ENCODE measurements at regions of chr9 and their contacts with region 1.

Region 1: GRCh38 chr9:68999393-69000105 is 14.4 kb downstream of the PRKACG start:
- DNase-seq: peak; percentile 65
- H3K4me3 Mint-ChIP-seq: no peak overlapping the region
- H3K27ac Mint-ChIP-seq: peak overlapping the region; percentile 64
- H3K4me1 Mint-ChIP-seq: peaks cover 42% of the 10 kb centered on the region
- H3K27me3 Mint-ChIP-seq: no peaks in the 10 kb centered on the region

Region 2: DNA sequence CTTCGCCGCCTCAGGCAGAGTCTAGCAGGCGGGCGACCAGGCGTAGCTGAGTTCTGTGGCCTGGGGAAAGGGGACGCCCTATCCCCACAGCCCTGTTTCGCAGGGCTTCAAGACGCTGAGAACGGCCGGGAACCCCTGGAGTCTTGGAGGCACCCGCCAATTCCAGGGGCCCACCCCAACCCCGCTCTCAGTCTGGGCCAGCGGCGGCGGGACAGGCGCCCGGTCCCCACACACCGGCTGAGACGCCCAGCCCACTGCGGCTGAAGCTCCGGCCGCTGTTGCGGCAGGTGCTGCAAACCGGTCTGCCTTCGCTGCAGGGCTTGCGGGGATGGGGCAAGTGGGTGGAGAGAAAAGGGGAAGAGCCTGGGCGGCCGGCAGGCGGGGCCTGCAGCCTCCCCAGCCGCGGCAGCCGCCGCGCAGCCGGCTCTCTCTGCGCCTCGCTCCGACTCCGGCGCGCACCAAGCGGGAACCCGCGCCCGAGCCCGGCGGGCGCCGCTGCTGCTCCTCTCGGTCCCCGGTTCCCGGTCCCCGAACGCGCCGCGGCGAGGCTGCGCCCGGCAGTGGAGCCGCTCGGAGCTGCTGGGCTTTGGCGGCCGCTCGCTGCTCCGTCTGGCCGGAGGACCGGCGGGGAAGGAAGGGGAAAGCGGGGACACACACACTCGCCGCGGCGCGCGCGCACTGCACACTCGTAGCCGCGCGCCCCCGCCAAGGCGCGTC is 294.6 kb before region 1 on chr9 and contains the start of gene PIP5K1B:
- intact Hi-C with region 1: loop called (anchors 2 kb)
- DNase-seq: peak; percentile 69
- H3K4me3 Mint-ChIP-seq: peak within 1 kb of the TSS; percentile 88
- H3K27ac Mint-ChIP-seq: peak within 1 kb of the TSS; percentile 67
- H3K4me1 Mint-ChIP-seq: peaks cover 54% of the 10 kb centered on the region
- H3K27me3 Mint-ChIP-seq: peaks cover 36% of the 10 kb centered on the region
- total RNA-seq, gene PIP5K1B: 76.2 and 77.2 TPM in 2 replicates

Region 3: DNA sequence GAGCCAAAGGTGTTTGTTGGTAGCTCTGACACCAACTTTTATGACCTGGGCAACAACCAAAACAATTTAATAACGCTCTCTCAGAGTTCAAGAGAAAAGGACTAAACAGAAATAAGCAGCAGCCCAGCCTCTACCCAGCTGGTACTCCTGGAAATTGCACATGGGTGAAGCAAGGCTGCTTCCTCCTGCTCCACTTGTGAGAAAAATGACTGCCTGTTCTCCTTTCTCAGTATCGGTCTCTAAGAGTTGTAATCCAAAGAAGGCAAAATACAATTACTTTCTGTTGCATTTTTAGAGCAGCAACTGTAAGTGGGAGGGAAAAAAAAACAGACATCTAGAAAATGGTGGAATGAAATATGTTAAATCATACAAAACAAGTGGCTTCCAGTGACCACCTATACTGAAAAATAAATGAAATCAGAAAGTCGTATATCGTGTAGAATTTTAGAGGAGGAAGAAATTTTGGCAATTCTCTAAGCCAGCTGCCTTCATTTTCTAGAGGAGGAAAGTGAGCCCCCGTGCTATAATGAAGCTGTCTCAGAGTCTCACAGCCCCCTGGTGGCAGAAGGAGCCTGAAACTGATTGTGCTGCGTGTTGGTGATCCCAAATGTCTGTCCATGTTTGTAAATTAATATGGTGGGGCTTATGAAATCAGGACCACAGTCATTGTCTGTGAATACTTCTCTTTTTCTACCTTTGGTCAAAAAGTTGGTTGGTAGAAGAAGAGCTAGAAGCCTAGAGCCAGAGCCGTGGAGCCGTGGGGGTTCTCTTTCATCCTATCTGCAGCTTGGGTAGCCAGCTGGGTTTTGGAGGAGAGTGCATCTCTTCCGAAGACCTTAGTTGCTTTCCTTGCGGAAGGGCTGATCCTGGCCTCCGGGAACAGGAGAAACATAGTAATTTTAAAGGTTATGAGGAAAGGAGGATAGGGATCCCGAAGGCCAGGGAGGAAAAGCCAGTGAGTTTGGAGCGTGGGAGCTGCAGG is 154.6 kb before region 1 on chr9:
- intact Hi-C with region 1: loop called (anchors 5 kb)
- DNase-seq: no peak
- H3K4me3 Mint-ChIP-seq: no peak overlapping the region
- H3K27ac Mint-ChIP-seq: peak overlapping the region; percentile 51
- H3K4me1 Mint-ChIP-seq: peaks cover 42% of the 10 kb centered on the region
- H3K27me3 Mint-ChIP-seq: no peaks in the 10 kb centered on the region

Region 4: DNA sequence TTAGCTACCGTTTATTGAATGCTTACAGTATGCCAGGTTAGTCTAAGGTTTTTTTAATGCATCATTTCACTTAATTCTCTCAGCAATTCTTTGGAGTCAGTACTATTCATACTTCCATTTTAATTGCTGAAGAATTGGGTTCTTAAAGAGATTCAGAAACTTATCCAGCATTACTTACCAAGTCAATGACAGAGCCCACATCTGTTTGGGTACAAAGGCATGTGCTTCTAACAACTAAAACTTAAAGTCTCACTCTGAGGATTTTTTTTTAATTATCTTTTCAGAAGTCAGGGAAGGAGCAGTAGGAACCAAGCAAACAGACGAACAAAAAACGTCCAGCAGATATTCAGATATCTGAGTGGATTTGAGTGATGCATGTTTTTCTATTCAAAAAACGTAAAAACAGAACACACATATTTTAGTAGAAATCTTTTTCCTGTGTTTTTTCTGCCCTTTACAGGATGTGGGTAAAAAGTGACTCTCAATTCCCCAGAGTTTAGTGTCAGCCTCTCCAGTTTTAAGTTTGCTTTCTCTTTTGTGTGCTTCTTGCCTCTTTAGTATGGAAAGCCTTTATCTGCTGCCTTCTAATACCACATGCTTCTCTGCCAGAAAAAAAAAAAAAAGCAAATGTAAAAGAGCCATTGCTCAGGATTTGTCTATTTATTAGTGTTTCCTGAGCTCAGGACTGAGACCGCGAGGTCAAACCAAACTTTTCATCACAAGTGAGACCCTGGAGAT is 103.6 kb before region 1 on chr9:
- intact Hi-C with region 1: loop called (anchors 5 kb)
- DNase-seq: no peak
- H3K4me3 Mint-ChIP-seq: peak overlapping the region; percentile 78
- H3K27ac Mint-ChIP-seq: peak overlapping the region; percentile 94
- H3K4me1 Mint-ChIP-seq: peaks cover 57% of the 10 kb centered on the region
- H3K27me3 Mint-ChIP-seq: no peaks in the 10 kb centered on the region

Region 5: DNA sequence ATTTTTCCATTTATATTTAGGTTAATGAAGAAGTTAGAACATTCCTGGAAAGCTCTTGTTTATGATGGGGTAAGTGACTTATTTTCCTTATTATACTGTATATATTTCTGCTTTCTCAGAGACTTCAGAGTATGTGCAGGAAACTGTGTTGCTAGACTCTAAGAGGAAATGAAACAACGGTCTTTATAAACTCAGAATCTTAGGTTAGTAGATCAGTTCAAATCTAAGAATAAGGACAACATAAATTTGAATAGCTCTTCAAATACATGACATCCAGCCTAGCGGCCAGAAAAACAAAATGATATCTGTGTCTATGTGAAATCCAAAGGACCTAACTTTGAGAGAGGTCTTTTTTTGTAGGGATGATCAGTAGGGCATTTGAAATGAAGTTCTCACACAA is 79.9 kb before region 1 on chr9:
- intact Hi-C with region 1: loop called (anchors 5 kb)
- DNase-seq: no peak
- H3K4me3 Mint-ChIP-seq: no peak overlapping the region
- H3K27ac Mint-ChIP-seq: peak overlapping the region; percentile 51
- H3K4me1 Mint-ChIP-seq: peaks cover 36% of the 10 kb centered on the region
- H3K27me3 Mint-ChIP-seq: no peaks in the 10 kb centered on the region

Region 6: GRCh38 chr9:68941780-68942459 is 57.6 kb before region 1 on chr9:
- intact Hi-C with region 1: loop called (anchors 5 kb)
- DNase-seq: no peak
- H3K4me3 Mint-ChIP-seq: no peak overlapping the region
- H3K27ac Mint-ChIP-seq: no peak overlapping the region
- H3K4me1 Mint-ChIP-seq: peaks cover 29% of the 10 kb centered on the region
- H3K27me3 Mint-ChIP-seq: peaks cover 1% of the 10 kb centered on the region

Region 7: GRCh38 chr9:68983008-68983411 is 16.5 kb before region 1 on chr9:
- intact Hi-C with region 1: no loop called
- DNase-seq: no peak
- H3K4me3 Mint-ChIP-seq: no peak overlapping the region
- H3K27ac Mint-ChIP-seq: peak overlapping the region; percentile 78
- H3K4me1 Mint-ChIP-seq: peaks cover 69% of the 10 kb centered on the region
- H3K27me3 Mint-ChIP-seq: no peaks in the 10 kb centered on the region

Region 8: GRCh38 chr9:69027355-69028096 is 28.0 kb after region 1 on chr9:
- intact Hi-C with region 1: loop called (anchors 2 kb)
- DNase-seq: peak; percentile 30
- H3K4me3 Mint-ChIP-seq: no peak overlapping the region
- H3K27ac Mint-ChIP-seq: no peak overlapping the region
- H3K4me1 Mint-ChIP-seq: peaks cover 54% of the 10 kb centered on the region
- H3K27me3 Mint-ChIP-seq: no peaks in the 10 kb centered on the region

Region 9: DNA sequence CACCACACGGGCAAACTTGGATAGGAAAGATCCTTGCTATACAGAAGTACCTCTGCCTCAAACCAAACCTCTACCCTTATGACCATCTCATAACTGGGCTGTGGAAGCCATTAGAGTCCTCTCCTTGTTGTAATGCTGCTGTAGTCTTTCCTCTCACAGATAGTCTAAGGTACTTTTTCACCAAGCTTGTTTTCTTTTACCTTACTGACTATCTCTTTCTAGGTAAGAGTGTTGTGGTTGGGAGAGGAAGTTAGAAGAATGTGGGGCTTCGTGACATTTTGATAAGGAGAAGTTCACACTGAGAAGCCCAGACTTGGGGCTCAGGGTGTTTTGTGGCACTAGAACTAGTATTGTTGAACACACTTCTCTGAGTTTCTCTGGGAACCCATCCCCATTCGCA is 829.9 kb after region 1 on chr9:
- intact Hi-C with region 1: no loop called
- DNase-seq: no peak
- H3K4me3 Mint-ChIP-seq: peak overlapping the region; percentile 18
- H3K27ac Mint-ChIP-seq: peak overlapping the region; percentile 89
- H3K4me1 Mint-ChIP-seq: peaks cover 58% of the 10 kb centered on the region
- H3K27me3 Mint-ChIP-seq: no peaks in the 10 kb centered on the region